Dorsolateral prefrontal cortex (tissue), 120 donors: ENCODE measurements at regions of chr12 and their contacts with region 1.

Region 1: GRCh38 chr12:53551889-53552291 is 44.6 kb upstream of the NPFF start:
- DNase-seq: peak in 1 of 10 donors; percentile 32
- H3K4me3 ChIP-seq: no peak overlapping the region
- H3K27ac ChIP-seq: peak overlapping the region in 47 of 59 donors; percentile 2 to 86 (median 57)
- H3K27me3 ChIP-seq: no peaks in the 10 kb centered on the region
- CTCF ChIP-seq: peak in 13 of 56 donors; percentile 7 to 35 (median 17)

Region 2: DNA sequence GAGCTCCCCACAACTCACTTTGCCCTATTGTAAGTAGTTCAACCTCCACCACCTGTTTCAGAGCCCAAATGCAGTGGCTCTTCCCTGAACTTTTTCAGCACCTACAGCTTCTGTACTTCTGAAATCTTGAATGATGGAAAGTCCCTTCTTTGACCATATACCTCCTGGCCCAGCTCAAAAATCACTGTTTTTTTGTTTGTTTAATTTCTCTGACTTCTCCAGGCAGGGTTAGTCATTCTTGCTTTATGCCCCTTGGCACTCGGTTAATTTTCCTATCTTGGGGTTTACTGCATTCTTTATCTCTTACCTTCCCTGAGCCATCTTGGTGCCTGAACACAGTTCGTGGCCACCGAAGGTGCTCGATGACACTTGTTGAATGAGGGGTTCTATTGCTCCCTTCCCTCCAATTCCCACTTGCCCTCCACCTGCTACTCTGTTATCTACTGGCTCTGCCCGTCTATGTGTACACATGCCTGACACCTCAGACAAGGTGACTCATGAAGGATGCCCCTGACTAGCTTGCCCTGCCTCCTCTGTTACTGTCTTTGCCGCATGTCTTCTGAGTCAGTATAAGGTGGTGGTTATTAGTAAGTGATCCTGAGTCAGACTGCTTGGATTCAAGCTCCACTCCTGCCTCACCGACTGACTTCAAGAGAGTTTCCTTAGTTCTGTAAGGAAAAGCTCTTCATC is 123.8 kb before region 1 on chr12:
- intact Hi-C with region 1: no loop called
- DNase-seq: no peak
- H3K4me3 ChIP-seq: no peak overlapping the region
- H3K27ac ChIP-seq: no peak overlapping the region
- H3K27me3 ChIP-seq: no peaks in the 10 kb centered on the region
- CTCF ChIP-seq: no peak

Region 3: DNA sequence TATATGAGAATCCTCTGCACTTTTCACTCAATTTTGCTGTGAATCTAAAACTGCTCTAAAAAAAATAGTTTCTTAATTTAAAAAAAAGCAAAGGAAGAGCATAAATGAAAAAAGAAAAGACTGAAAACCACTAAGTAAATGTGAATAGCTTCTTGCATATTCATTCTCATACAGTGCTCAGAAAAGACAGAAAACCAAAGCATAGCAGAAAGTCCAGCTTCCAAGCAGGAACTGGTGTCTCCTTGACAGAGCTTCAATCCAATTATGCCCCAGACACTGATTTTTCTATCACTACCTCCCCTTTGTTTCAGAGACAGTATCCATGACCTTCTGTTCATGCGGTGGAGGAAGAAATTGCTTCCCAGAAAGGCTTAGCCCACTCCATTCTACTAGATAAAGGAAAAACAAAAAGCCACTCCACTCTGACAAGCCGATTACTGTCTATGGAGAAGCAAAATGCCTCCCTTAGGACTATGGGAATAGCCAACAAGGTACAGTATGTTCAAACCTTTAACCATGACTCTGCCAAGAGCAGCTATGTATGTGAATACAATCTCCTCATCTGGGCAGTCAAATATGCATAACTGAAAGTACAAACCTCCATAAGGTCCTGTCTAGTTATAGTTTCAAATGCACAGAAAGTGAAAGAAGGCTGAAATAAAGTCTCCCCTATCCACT is 33.7 kb after region 1 on chr12:
- intact Hi-C with region 1: loop called in 1 of 2 experiments (anchors 5 kb)
- DNase-seq: no peak
- H3K4me3 ChIP-seq: no peak overlapping the region
- H3K27ac ChIP-seq: peak overlapping the region in 50 of 59 donors; percentile 1 to 75 (median 48)
- H3K27me3 ChIP-seq: no peaks in the 10 kb centered on the region
- CTCF ChIP-seq: no peak